Activated B cell treated with CpG ODN at 0.5 μM for 24 hours (primary cell): ENCODE measurements at regions of chr1 and their contacts with region 1.

Region 1: GRCh38 chr1:67685067-67685557 is at the start of gene GADD45A:
- DNase-seq: peak; percentile 81
- ATAC-seq: peak; percentile 87
- H3K4me3 Mint-ChIP-seq: peak within 1 kb of the TSS; percentile 95
- H3K27ac Mint-ChIP-seq: peak within 1 kb of the TSS; percentile 81
- H3K4me1 Mint-ChIP-seq: peaks cover 38% of the 10 kb centered on the region
- H3K27me3 Mint-ChIP-seq: no peaks in the 10 kb centered on the region
- CTCF ChIP-seq: no peak
- total RNA-seq, gene GADD45A: 8.3 and 8.7 TPM in 2 replicates

Region 2: GRCh38 chr1:66271216-66271903 is 1413.8 kb before region 1 on chr1:
- CTCF ChIA-PET with region 1: no interaction called
- POLR2A ChIA-PET with region 1: no interaction called
- intact Hi-C with region 1: loop called (anchors 10 kb)
- DNase-seq: no peak
- ATAC-seq: peak; percentile 78
- H3K4me3 Mint-ChIP-seq: peak overlapping the region; percentile 57
- H3K27ac Mint-ChIP-seq: peak overlapping the region; percentile 81
- H3K4me1 Mint-ChIP-seq: peaks cover 51% of the 10 kb centered on the region
- H3K27me3 Mint-ChIP-seq: no peaks in the 10 kb centered on the region
- CTCF ChIP-seq: no peak

Region 3: DNA sequence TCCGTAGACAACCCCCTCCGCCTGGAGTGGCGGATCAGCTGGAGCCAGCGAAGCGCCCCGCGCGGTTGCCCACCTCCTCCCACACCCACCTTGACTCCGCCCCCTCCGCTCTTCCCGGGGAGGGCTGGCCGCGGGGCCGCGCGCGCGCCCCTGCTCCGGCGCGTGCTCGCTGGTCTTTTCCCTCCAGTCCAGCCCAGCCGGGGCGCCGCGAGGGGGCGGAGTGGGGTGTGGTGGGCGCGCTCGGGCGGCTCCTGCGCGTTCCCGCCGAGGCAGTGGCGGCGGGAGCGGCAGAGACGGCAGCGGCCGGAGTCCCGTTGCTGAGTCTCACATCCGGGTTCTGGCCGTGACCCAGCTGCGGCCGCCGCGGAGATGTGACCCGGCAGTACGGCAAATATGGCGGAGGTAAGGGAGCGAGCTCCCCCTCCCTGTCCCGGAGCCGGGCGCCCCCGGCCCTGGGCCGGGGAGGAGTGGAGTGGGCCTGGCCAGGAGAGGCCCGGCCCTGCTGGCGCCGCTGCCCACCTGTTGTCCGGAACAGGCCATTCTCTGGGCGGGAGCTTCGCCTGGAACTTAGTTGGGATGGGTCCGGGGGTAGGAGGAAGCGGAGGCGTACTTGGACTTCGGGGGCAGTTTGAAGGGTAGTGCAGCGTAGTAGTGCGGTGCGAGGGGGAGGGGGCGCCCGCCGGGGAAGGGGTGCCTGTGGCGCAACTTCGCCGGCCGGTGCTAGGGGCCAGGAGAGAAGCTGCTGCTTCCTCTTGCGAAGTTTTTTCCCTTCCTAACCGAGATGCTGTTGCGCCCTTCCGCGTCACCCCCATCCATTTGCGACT is 754.9 kb before region 1 on chr1:
- CTCF ChIA-PET with region 1: no interaction called
- POLR2A ChIA-PET with region 1: interaction called, 6 read pairs
- intact Hi-C with region 1: loop called (anchors 1 kb)
- DNase-seq: peak; percentile 98
- ATAC-seq: peak; percentile 78
- H3K4me3 Mint-ChIP-seq: peak overlapping the region; percentile 94
- H3K27ac Mint-ChIP-seq: peak overlapping the region; percentile 93
- H3K4me1 Mint-ChIP-seq: peaks cover 57% of the 10 kb centered on the region
- H3K27me3 Mint-ChIP-seq: no peaks in the 10 kb centered on the region
- CTCF ChIP-seq: no peak

Region 4: DNA sequence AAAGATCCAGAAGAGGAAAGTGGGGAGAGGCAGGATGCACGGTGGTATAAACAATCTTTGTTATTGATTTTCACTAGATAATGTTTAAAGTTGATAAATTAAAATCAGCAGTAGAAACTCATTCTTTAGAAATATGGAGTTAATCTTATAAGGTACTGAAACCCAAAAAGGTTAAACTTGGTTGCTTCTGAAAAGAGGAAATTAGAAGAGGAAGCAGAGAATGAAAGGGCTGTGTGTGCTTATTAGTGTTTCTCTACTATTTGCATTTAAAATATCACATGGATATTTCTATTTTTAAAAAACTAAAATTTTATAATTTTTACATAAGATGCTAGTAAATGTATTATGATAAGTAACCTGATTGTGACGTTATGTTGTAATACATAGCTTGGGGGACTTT is 574.8 kb before region 1 on chr1:
- CTCF ChIA-PET with region 1: no interaction called
- POLR2A ChIA-PET with region 1: no interaction called
- intact Hi-C with region 1: loop called (anchors 10 kb)
- DNase-seq: no peak
- ATAC-seq: peak; percentile 60
- H3K4me3 Mint-ChIP-seq: peak overlapping the region; percentile 58
- H3K27ac Mint-ChIP-seq: peak overlapping the region; percentile 76
- H3K4me1 Mint-ChIP-seq: peaks cover 41% of the 10 kb centered on the region
- H3K27me3 Mint-ChIP-seq: no peaks in the 10 kb centered on the region
- CTCF ChIP-seq: no peak

Region 5: DNA sequence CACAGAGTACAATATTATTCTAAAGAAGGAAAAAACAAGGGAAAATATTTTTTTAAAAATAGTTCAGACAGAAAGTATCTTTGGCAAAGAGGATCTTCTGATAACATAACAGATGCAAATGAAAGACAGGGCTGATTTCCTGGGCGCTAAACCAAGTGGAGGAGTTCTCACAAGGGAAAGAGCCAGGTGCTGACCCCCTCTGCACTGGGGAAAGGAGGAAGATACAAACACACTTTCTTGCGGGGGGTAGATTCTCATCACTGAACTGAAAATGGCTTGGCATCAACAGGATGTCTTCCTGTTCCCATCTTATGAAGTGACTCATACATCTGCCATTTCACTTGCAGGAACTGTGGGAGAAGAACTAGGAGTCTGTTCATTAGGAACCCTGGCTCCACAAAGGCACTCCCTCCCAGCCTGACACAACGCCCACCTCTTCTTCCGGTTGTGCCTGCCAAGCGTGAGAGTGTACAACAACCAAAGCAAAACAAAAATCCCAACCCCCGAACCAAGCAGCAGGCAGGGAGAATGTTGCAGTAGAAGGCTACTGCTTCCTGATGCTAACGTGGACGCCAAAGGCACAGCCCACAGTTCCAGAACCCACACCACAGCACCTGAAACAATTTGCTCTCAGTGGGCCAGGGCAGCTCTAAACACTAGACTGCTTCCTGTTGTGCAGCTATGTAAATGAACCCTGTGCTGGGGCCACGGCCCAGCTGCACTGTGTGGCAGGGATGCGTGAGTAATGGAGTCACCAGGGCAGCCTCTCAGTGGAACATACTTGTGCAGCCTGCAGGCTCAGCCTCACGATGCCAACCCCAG is 50.9 kb after region 1 on chr1:
- CTCF ChIA-PET with region 1: no interaction called
- POLR2A ChIA-PET with region 1: interaction called, 19 read pairs
- intact Hi-C with region 1: loop called (anchors 1 kb)
- DNase-seq: peak; percentile 24
- ATAC-seq: peak; percentile 98
- H3K4me3 Mint-ChIP-seq: peak overlapping the region; percentile 79
- H3K27ac Mint-ChIP-seq: peak overlapping the region; percentile 89
- H3K4me1 Mint-ChIP-seq: peaks cover 44% of the 10 kb centered on the region
- H3K27me3 Mint-ChIP-seq: no peaks in the 10 kb centered on the region
- CTCF ChIP-seq: no peak